Heart right ventricle (tissue), 16 donors: ENCODE measurements at regions of chr15 and their contacts with region 1.

Region 1: GRCh38 chr15:73800662-73801345 is 47.7 kb upstream of the INSYN1 start:
- DNase-seq: peak; percentile 75 to 79
- ATAC-seq: peak; percentile 65 to 88 (median 80)
- H3K4me3 ChIP-seq: no peak overlapping the region
- H3K27ac ChIP-seq: peak overlapping the region; percentile 63 to 90 (median 82)
- H3K4me1 ChIP-seq: peaks cover 13 to 70% (median 45%) of the 10 kb centered on the region in 9 donors
- H3K27me3 ChIP-seq: no peaks in the 10 kb centered on the region
- CTCF ChIP-seq: no peak

Region 2: GRCh38 chr15:73717802-73718201 is 83.0 kb before region 1 on chr15:
- intact Hi-C with region 1: loop called in 1 of 10 experiments (anchors 5 kb)
- DNase-seq: no peak
- ATAC-seq: no peak
- H3K4me3 ChIP-seq: no peak overlapping the region
- H3K27ac ChIP-seq: no peak overlapping the region
- H3K4me1 ChIP-seq: peaks cover 0 to 24% (median 8%) of the 10 kb centered on the region in 9 donors
- H3K27me3 ChIP-seq: no peaks in the 10 kb centered on the region
- CTCF ChIP-seq: peak in 2 of 9 donors; percentile 14 to 18

Region 3: GRCh38 chr15:73838831-73839426 is 38.1 kb after region 1 on chr15:
- intact Hi-C with region 1: loop called in 1 of 10 experiments (anchors 5 kb)
- DNase-seq: peak; percentile 81 to 82
- ATAC-seq: peak; percentile 90 to 98 (median 96)
- H3K4me3 ChIP-seq: no peak overlapping the region
- H3K27ac ChIP-seq: peak overlapping the region in 7 of 10 donors; percentile 15 to 65 (median 40)
- H3K4me1 ChIP-seq: peaks cover 0 to 15% (median 5%) of the 10 kb centered on the region in 9 donors
- H3K27me3 ChIP-seq: peaks cover 0 to 8% (median 0%) of the 10 kb centered on the region in 7 donors
- CTCF ChIP-seq: peak in 2 of 9 donors; percentile 8 to 22

Region 4: DNA sequence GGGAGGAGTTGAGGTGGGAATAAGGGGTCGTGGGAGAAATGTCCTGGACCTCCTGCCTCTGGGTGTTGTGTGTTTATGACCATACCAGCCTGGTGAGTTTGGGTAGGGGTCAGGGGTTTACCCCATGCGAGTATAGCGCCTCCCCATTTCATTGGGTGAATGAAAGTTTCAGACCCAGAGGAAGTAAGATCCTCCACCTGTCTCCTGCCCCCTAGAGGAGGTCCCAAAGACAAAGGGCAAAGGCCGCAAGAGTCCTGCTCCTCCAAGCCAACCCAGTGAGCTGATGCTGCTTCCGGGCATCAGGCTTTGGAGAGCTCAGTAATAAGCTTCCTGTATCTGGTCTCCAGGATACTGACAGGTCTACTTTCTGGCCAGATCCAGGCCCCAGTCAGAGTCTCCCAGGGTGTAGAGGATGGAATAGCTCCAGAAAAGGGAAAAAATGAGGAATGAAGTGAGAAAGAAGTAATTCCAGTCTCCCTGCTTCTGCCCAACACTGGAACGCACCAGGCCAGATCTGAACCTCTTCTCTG is 66.1 kb after region 1 on chr15:
- intact Hi-C with region 1: no loop called
- DNase-seq: no peak
- ATAC-seq: peak in 1 of 8 donors; percentile 31
- H3K4me3 ChIP-seq: no peak overlapping the region
- H3K27ac ChIP-seq: peak overlapping the region in 3 of 10 donors; percentile 38 to 65 (median 43)
- H3K4me1 ChIP-seq: peaks cover 5 to 38% (median 20%) of the 10 kb centered on the region in 9 donors
- H3K27me3 ChIP-seq: peaks cover 0 to 12% (median 0%) of the 10 kb centered on the region in 7 donors
- CTCF ChIP-seq: peak in 4 of 9 donors; percentile 6 to 20 (median 11)

Region 5: GRCh38 chr15:73927476-73928240 is 126.9 kb after region 1 on chr15:
- intact Hi-C with region 1: loop called in 1 of 10 experiments (anchors 10 kb)
- DNase-seq: peak in 1 of 2 donors; percentile 67
- ATAC-seq: peak; percentile 17 to 51 (median 43)
- H3K4me3 ChIP-seq: peak overlapping the region; percentile 51 to 77 (median 66)
- H3K27ac ChIP-seq: peak overlapping the region; percentile 80 to 95 (median 92)
- H3K4me1 ChIP-seq: peaks cover 32 to 94% (median 67%) of the 10 kb centered on the region in 9 donors
- H3K27me3 ChIP-seq: peaks cover 0 to 33% (median 3%) of the 10 kb centered on the region in 7 donors
- CTCF ChIP-seq: peak; percentile 23 to 72 (median 55)

Region 6: DNA sequence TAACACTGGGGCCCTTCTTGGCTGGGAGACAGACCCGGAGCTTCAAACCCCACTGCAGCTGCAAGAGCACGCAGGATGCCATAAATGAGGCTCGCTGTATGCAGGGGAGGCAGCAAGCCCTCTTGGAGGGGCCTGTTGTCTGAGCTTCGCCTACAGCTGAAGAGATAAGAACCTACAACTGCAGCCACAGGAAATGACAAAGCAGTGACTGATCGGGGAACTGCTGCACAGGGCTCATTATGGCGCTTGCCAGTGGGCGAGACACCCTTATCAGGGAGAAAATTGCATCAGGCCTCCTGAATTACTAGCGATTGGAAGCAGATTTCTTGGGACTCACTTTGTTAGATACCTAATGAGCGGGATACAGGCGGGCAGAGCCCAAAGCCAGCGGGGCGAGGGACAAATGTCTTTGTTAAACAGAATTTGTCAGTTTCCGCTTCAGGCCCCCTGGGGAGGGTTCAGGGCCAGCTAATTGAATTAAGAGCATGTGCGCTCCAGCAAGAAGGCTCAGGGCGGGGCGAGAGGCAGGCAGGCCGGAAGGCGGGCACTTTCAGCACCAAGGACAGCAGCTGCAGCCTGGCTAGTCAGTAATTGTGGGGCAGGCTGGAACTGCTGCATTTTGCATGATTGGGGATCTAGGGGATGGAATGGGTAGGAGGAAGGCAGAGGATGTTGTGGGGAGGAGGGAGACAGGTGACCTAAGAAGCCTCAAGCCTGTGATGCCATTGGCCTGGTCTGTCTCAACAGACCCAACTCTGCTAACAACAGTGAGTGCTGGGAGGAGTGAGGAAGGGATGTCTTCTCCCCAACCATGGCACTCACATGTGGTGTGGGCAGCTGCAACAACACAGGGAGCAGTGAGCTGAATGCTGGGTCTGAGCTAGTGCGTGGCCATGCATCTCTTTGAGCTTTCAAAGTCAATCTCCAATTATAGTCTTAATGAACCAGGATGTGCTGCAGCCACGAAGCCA is 490.6 kb after region 1 on chr15:
- intact Hi-C with region 1: no loop called
- DNase-seq: peak; percentile 86 to 90
- ATAC-seq: peak; percentile 84 to 93 (median 86)
- H3K4me3 ChIP-seq: no peak overlapping the region
- H3K27ac ChIP-seq: no peak overlapping the region
- H3K4me1 ChIP-seq: peaks cover 0 to 17% (median 4%) of the 10 kb centered on the region in 9 donors
- H3K27me3 ChIP-seq: peaks cover 0 to 18% (median 6%) of the 10 kb centered on the region in 7 donors
- CTCF ChIP-seq: no peak

Region 7: GRCh38 chr15:74723754-74724334 is 923.0 kb after region 1 on chr15:
- intact Hi-C with region 1: no loop called
- DNase-seq: peak in 1 of 2 donors; percentile 19
- ATAC-seq: peak in 5 of 8 donors; percentile 47 to 64 (median 59)
- H3K4me3 ChIP-seq: no peak overlapping the region
- H3K27ac ChIP-seq: no peak overlapping the region
- H3K4me1 ChIP-seq: peaks cover 3 to 31% (median 21%) of the 10 kb centered on the region in 9 donors
- H3K27me3 ChIP-seq: peaks cover 0 to 46% (median 0%) of the 10 kb centered on the region in 7 donors
- CTCF ChIP-seq: no peak